ENCODE measurements at regions of chr6 and their contacts with region 1.

Region 1: GRCh38 chr6:154805288-154805911 is 72.2 kb downstream of the SCAF8 start:
- DNase-seq: no peak
- H3K4me3 ChIP-seq: no peak overlapping the region
- H3K27ac ChIP-seq: no peak overlapping the region
- H3K4me1 ChIP-seq: peaks cover 0 to 6% (median under 1%) of the 10 kb centered on the region in 6 donors
- H3K27me3 ChIP-seq: no peaks in the 10 kb centered on the region
- CTCF ChIP-seq: peak in 8 of 11 experiments; percentile 18 to 62 (median 45)
- POLR2A ChIP-seq: no peak

Region 2: DNA sequence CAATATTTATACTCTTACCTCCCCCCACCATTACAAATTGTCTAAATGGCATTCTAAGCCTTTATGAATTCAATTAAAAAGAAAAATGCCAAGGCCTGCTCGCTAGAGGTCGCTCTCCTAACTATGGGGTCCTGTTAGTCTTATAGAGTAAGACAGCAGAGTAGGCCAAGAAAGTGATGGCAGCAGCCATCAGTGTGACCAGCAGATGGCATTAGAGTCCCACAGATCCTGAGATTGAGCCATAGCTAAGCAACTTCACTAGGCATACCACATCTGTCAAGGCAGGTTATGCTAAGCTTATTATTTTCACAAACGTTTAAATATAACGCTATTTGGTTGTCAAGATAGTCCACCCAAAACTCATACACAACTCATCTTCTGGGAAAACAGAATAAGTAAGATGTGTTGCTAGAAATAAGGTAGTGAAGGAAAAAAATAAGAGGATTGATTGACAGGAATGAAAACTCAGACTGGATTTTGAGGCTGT is 129.8 kb before region 1 on chr6:
- intact Hi-C with region 1: loop called (anchors 5 kb)
- DNase-seq: peak; percentile 89
- H3K4me3 ChIP-seq: no peak overlapping the region
- H3K27ac ChIP-seq: no peak overlapping the region
- H3K4me1 ChIP-seq: peaks cover 0 to 7% (median 0%) of the 10 kb centered on the region in 6 donors
- H3K27me3 ChIP-seq: no peaks in the 10 kb centered on the region
- CTCF ChIP-seq: peak; percentile 94 to 100 (median 98)
- POLR2A ChIP-seq: no peak

Region 3: GRCh38 chr6:154733012-154733625 is 72.3 kb before region 1 on chr6 and contains the start of gene SCAF8:
- intact Hi-C with region 1: loop called (anchors 10 kb)
- DNase-seq: peak; percentile 98
- H3K4me3 ChIP-seq: peak within 1 kb of the TSS; percentile 64 to 97 (median 90)
- H3K27ac ChIP-seq: peak within 1 kb of the TSS; percentile 99 to 100 (median 100)
- H3K4me1 ChIP-seq: peaks cover 28 to 54% (median 51%) of the 10 kb centered on the region in 6 donors
- H3K27me3 ChIP-seq: no peaks in the 10 kb centered on the region
- CTCF ChIP-seq: peak; percentile 56 to 98 (median 91)
- POLR2A ChIP-seq: peak in 1 of 3 donors; percentile 58
- total RNA-seq, gene SCAF8: 46.9 to 60.7 (median 55.3) TPM